ENCODE measurements at regions of chr17 and their contacts with region 1.

Region 1: DNA sequence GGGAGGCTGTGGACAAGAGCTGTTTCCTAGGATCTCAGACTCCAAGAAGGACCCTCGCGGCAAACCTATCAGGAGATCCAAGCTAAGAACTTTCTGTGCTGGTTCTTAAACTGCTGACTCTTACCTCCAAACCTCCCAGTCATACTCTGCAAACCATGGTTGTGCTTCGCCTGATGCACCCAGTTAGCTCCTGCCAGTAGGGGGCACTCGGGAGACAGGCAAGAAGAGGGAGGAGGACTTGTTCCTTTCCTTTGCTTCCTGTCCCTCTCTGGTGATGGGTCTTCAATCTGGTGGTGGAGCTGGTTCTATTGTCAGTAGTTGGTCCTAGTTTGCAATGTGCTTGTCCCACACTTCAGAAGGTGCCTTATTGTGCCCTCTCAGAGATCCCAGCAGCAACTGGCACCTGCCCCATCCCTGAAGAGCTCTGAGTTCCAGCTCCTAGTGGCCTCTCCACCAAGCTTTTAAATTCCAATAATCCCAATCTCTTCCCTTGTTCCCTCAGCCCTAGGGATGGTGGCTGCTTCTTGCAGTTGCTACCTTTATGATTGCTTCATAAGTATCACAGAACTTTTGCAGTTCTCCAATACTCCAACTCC is 113.5 kb upstream of the RPL38 start:
- DNase-seq: peak; percentile 63
- H3K4me3 ChIP-seq: no peak overlapping the region
- H3K27ac ChIP-seq: no peak overlapping the region
- H3K4me1 ChIP-seq: peaks cover 0 to 8% of the 10 kb centered on the region in 2 experiments; a peak in 2 of 4 replicates
- H3K27me3 ChIP-seq: no peaks in the 10 kb centered on the region
- CTCF ChIP-seq: peak; percentile 23
- EP300 ChIP-seq: no peak
- RAD21 ChIP-seq: peak; percentile 76

Region 2: DNA sequence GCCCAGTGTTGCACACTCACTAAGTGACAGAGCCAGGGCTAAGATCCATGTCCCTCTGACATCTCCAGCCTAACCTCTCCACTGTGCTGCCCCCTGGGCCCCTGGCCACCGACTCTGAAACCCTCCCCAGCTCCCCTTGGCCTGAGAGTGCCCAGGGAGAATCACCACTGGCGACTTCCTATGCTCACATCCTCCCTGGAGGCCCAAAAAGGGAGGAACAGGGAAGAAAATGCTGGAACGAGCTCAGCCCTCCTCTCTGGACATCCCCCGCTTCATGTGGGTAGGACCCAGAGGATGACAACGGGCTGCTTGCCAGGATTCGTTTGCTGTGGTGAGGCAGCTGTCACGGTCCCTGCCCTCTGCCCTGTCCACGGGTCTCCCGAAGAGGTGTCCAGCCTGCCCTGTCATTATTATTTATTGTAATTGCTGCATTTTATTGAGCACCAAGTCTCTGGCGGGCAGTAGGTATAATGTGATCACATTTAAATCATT is 40.0 kb before region 1 on chr17:
- CTCF ChIA-PET with region 1: interaction called, 10 read pairs
- POLR2A ChIA-PET with region 1: no interaction called
- DNase-seq: no peak
- H3K4me3 ChIP-seq: no peak overlapping the region
- H3K27ac ChIP-seq: no peak overlapping the region
- H3K4me1 ChIP-seq: peaks cover 0 to 18% of the 10 kb centered on the region in 2 experiments; a peak in 1 of 4 replicates
- H3K27me3 ChIP-seq: no peaks in the 10 kb centered on the region
- CTCF ChIP-seq: no peak
- EP300 ChIP-seq: no peak
- RAD21 ChIP-seq: no peak

Region 3: DNA sequence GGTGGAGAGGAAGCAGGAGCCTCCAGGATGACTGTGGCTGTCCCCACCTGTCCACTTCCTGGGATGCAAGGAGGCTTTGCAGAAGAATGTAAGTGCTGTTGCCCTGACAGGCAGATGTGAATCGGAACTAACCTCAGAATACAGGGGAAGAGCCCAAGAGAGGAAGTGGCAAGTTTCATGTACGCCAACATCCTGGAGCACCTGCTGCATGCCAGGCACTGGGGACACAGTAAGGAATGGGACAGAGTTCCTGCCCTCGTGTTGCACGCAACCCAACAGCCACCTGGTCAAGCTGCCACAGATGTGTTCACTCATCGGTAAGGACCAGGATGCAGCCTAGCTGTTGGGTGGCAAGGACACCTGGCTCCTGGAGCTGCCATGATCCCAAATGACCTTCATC is 15.0 kb after region 1 on chr17:
- CTCF ChIA-PET with region 1: interaction called, 17 read pairs
- POLR2A ChIA-PET with region 1: no interaction called
- DNase-seq: no peak
- H3K4me3 ChIP-seq: no peak overlapping the region
- H3K27ac ChIP-seq: no peak overlapping the region
- H3K4me1 ChIP-seq: peaks cover 0 to 17% of the 10 kb centered on the region in 2 experiments; a peak in 1 of 4 replicates
- H3K27me3 ChIP-seq: no peaks in the 10 kb centered on the region
- CTCF ChIP-seq: no peak
- EP300 ChIP-seq: no peak
- RAD21 ChIP-seq: no peak

Region 4: GRCh38 chr17:74118504-74118903 is 28.5 kb after region 1 on chr17:
- CTCF ChIA-PET with region 1: interaction called, 31 read pairs
- POLR2A ChIA-PET with region 1: interaction called, 3 read pairs
- DNase-seq: peak; percentile 71
- H3K4me3 ChIP-seq: no peak overlapping the region
- H3K27ac ChIP-seq: no peak overlapping the region
- H3K4me1 ChIP-seq: peaks cover 0 to 17% of the 10 kb centered on the region in 2 experiments; a peak in 1 of 4 replicates
- H3K27me3 ChIP-seq: no peaks in the 10 kb centered on the region
- CTCF ChIP-seq: no peak
- EP300 ChIP-seq: no peak
- RAD21 ChIP-seq: 0 out of 2 replicates have a peak, but pooled peaks have one; percentile 18

Region 5: GRCh38 chr17:74182041-74182723 is 92.2 kb after region 1 on chr17:
- CTCF ChIA-PET with region 1: interaction called, 50 read pairs
- POLR2A ChIA-PET with region 1: no interaction called
- DNase-seq: no peak
- H3K4me3 ChIP-seq: no peak overlapping the region
- H3K27ac ChIP-seq: no peak overlapping the region
- H3K4me1 ChIP-seq: peaks cover 0 to 5% of the 10 kb centered on the region in 2 experiments; a peak in 1 of 4 replicates
- H3K27me3 ChIP-seq: no peaks in the 10 kb centered on the region
- CTCF ChIP-seq: no peak
- EP300 ChIP-seq: no peak
- RAD21 ChIP-seq: no peak